Cardiac septum (tissue), 1 donor: ENCODE measurements at regions of chr12 and their contacts with region 1.

Region 1: DNA sequence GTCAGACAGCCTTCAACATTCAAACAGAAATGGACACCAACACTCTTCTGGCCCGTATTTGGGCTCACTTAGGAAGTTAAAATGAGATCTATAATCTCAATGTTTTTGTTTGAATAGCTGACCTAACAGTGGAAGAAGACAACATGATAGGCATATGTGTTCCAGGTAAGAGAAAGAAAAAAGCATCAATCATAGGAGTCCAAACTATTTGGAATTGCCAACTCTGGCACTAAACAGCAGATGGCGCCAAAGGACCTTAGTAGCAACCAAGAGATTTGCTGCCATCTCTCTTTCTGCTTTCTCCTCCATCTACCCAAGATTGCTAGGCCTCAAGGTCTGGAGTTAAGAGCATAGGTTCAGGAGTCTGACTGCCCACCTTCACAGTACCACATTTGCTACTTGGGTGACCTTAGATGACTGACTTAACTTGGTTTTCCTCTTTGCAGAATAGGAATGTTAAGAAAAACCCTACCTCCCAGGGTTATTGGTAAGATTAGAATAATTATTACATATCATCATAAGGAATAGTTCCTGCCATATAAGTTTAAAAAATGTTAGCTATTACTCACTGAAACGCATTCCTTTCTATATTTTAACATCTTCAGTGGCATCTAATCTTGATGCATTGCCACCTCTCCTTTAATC is 30.2 kb downstream of the PEX5 start:
- DNase-seq: no peak

Region 2: GRCh38 chr12:7460375-7461259 is 240.9 kb after region 1 on chr12:
- intact Hi-C with region 1: loop called (anchors 2 kb)
- DNase-seq: no peak

Region 3: GRCh38 chr12:7638760-7639555 is 419.2 kb after region 1 on chr12:
- intact Hi-C with region 1: loop called (anchors 1 kb)
- DNase-seq: no peak